ENCODE measurements at regions of chr22 and their contacts with region 1.

Region 1: GRCh38 chr22:30097861-30098260 is 17.6 kb downstream of the HORMAD2 start:
- DNase-seq: no peak
- H3K4me3 ChIP-seq: no peak overlapping the region
- CTCF ChIP-seq: no peak

Region 2: GRCh38 chr22:30015846-30016245 is 82.0 kb before region 1 on chr22:
- CTCF ChIA-PET with region 1: no interaction called
- POLR2A ChIA-PET with region 1: no interaction called
- DNase-seq: peak; percentile 55
- H3K4me3 ChIP-seq: no peak overlapping the region
- CTCF ChIP-seq: no peak

Region 3: DNA sequence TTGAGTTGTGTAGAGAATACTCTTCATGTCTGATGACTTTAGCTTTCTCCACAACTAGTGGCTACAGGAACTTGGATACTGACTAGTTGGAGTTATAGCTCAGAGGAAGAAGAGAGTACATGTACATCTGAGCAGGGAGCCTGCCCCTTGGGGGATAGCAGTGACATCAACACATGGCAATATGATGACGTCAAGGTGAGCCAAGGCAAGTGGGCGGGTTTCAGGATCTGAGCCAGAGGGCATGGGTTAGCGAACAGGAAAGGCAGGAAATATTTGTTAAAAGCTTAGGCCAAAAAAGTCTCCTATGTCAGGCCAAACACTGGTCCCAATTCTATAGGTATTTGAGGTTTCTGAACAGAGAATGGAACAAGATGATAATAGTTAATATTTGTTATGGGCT is 59.6 kb before region 1 on chr22:
- CTCF ChIA-PET with region 1: no interaction called
- POLR2A ChIA-PET with region 1: no interaction called
- DNase-seq: no peak
- H3K4me3 ChIP-seq: no peak overlapping the region
- CTCF ChIP-seq: no peak

Region 4: GRCh38 chr22:30121960-30122359 is 24.1 kb after region 1 on chr22:
- CTCF ChIA-PET with region 1: no interaction called
- POLR2A ChIA-PET with region 1: no interaction called
- DNase-seq: no peak
- H3K4me3 ChIP-seq: no peak overlapping the region
- CTCF ChIP-seq: no peak

Region 5: DNA sequence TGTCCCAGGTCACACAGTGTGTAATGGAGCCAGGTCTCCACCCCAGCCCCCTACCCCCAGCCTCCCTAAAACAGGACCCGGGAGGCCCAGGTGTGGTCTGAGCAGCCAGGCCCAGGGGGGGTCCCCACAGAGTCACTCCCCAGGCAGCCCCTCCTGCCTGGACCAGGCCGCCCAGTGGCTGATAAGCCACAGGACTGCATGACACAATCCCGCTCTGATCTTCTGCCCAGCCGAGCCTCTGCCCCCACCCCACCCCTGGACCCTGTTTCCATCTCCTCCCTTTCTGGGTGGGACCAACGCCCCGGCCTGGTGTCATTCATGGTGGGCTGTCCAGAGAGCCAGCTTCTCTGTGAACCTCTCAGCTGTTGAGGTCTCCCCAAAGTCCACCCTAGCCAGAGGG is 156.5 kb after region 1 on chr22:
- CTCF ChIA-PET with region 1: interaction called, 10 read pairs
- POLR2A ChIA-PET with region 1: no interaction called
- DNase-seq: no peak
- H3K4me3 ChIP-seq: no peak overlapping the region
- CTCF ChIP-seq: no peak